ENCODE measurements at regions of chr1 and their contacts with region 1.

Region 1: DNA sequence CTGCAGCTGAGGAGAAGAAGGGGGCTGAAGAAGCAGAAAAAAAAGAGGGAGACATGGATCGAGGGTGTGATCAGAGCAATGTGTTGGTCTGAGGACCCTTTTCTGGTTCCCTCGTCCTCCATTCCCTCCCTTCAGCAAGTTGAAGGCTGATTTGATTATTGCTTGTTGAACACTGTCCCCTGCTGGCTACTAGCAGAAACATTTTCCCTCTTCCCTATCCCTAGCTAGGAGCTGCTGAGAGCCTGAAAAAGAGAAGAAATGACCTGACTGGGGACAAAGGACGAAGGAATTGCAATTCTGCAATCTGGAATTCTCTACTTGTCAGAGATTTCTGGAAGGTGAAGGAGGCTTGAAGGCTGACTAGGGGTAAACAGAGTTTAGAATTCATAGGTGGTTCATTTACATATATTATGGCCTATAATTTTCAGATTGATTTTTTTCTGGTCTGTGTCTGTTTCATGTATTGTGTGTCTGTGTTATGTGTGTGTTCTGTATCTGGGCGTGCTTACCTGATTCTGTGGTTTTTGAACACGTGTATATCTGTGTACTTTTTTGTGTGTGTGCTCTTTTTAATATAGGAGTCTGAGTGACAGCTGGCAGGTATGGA is 9.8 kb downstream of the NHLH1 start:
- DNase-seq: peak; percentile 44
- H3K4me3 Mint-ChIP-seq: no peak overlapping the region
- H3K27ac Mint-ChIP-seq: no peak overlapping the region
- H3K4me1 Mint-ChIP-seq: peaks cover 12% of the 10 kb centered on the region
- H3K27me3 Mint-ChIP-seq: peaks cover 35% of the 10 kb centered on the region

Region 2: DNA sequence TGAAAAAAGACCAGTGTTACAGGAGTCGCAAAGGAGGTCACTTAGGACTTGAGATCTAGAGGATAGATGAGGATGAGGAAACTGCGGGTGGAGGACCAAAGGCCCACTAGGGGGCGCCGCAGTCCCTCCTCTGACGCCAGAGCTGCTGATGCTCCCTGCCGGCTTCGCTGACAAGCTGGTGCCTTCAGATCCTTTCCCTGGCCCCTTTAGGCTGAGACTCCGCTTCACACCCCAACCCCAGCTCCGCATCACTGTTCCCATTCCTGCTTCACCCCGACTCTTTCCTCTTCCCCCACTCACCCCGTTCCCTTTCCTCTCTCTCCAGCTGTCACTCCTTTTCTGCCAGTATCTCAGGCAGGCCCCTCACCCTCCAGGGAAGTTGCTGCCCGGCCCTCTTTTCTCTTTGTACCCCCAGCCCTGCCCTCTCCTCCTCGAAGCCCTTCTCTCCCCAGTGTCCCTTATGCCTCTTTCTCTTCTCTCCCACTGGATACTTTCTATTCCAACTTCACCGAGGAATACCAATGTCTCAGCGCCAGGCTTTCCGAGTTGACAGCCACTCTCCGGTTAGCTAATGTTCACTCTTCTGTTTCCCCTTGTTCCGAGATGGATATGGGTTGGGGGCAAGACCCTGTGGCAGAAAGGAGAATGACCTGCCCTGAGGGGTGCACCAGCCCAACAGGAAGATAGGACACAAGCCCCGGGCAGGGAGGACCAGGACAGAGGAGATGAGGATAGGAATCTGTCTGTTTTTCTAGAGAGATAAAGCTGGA is 290.8 kb before region 1 on chr1:
- CTCF ChIA-PET with region 1: interaction called, 20 read pairs
- DNase-seq: peak; percentile 85
- H3K4me3 Mint-ChIP-seq: no peak overlapping the region
- H3K27ac Mint-ChIP-seq: no peak overlapping the region
- H3K4me1 Mint-ChIP-seq: peaks cover 12% of the 10 kb centered on the region
- H3K27me3 Mint-ChIP-seq: peaks cover 32% of the 10 kb centered on the region

Region 3: DNA sequence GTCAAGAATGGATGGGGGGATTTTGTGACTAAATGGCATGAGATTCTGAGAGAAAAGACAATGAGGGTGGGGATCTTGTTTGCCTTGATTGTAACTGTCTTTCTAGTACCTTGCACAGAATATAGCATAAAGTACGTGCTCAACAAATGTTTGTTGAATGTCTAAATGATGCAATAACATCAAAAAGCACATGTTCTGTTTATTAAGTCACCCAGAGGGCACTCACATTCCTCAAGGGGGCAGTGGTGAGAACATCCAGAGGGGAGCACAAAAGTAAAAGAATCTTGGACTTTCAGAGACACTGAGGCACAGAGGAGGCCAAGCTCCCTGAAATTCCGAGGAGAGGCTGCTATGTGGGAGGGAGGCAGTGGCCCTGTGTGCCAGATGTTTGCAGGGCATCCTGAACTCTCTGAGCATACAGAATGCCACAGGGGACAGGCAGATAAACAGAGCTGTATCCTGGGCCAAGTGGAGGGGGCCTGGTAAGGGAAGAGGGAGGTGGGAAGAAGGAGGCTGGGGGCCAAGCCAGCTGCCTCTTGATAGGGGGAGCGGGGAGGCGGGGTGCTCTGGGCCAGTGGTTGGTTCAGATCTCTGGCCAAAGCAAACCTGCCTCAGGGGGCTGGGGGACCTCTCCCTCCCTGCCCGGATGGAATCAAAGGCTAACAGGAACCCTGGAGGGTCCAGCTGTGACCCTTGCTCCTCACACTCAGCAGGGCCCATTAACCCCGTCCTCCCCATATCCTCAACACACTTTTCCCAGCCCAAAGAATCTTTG is 267.6 kb before region 1 on chr1:
- CTCF ChIA-PET with region 1: interaction called, 11 read pairs
- DNase-seq: peak; percentile 59
- H3K4me3 Mint-ChIP-seq: no peak overlapping the region
- H3K27ac Mint-ChIP-seq: peak overlapping the region; percentile 43
- H3K4me1 Mint-ChIP-seq: no peaks in the 10 kb centered on the region
- H3K27me3 Mint-ChIP-seq: peaks cover 49% of the 10 kb centered on the region

Region 4: GRCh38 chr1:160144921-160145320 is 231.7 kb before region 1 on chr1:
- CTCF ChIA-PET with region 1: no interaction called
- DNase-seq: no peak
- H3K4me3 Mint-ChIP-seq: no peak overlapping the region
- H3K27ac Mint-ChIP-seq: no peak overlapping the region
- H3K4me1 Mint-ChIP-seq: no peaks in the 10 kb centered on the region
- H3K27me3 Mint-ChIP-seq: peaks cover 39% of the 10 kb centered on the region

Region 5: DNA sequence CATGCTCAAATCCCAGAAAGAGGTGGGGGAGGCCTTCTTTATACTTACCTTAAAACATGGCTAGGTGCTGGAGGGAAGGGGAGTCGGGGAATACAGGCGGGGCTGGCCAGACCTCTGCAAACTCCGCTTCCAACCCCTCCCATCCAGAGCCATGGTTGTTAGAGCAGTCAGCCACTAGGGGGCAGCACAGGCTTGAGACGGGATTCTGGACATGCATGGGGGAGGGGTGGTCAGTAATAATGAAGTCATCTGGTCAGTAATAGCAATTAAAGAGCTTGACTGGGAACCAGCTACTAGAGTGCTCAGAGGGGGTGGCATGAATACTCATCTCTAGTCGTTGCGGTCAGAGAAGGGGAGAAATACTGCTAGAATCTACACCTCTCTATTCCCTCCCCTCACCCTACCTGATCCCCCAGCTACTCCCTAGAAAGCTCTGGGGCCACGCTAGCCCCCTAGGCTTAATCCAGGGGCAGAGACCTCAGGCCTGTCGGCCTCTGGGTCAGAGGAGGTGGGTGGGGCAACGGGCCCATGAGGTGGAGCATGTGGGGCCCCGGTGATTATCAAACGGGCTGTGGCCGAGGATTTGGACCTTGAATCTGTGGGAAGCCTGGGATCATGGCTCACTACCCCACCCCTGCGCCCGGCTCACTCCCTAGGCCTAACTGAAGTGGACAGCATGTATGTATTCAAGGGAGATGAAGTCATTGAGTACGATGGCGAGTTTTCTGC is 183.4 kb before region 1 on chr1:
- CTCF ChIA-PET with region 1: interaction called, 15 read pairs
- DNase-seq: peak; percentile 86
- H3K4me3 Mint-ChIP-seq: no peak overlapping the region
- H3K27ac Mint-ChIP-seq: no peak overlapping the region
- H3K4me1 Mint-ChIP-seq: no peaks in the 10 kb centered on the region
- H3K27me3 Mint-ChIP-seq: peaks cover 19% of the 10 kb centered on the region

Region 6: DNA sequence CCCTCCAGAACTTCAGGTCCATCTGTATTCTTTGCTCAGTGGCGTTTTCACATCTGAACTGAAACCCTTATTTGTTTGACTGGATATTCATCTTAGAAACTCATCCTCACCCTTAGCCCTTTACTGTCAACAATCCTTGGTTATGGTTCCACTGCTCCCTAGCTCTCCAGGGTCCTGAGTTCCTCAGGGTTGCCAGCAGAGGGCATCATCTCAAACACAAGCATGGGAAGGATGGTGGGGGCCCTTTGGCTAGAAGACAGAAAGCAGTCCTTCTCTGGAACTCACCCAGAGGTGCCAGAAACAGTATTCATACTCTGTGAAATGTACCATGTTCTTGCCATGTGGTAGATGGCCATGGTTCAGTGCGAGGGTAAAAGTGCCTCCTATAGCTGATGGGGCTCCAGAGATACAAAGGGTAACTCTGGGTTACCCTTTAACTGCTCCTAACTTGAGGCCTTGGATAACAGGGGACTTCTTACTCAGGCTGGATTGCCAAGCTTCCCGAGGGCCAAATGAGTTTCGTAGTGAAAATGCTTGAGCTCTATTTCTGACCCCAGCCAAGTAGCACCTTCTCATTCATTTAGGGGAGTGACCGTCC is 22.1 kb before region 1 on chr1:
- CTCF ChIA-PET with region 1: interaction called, 60 read pairs
- DNase-seq: peak; percentile 44
- H3K4me3 Mint-ChIP-seq: no peak overlapping the region
- H3K27ac Mint-ChIP-seq: no peak overlapping the region
- H3K4me1 Mint-ChIP-seq: no peaks in the 10 kb centered on the region
- H3K27me3 Mint-ChIP-seq: no peaks in the 10 kb centered on the region

Region 7: DNA sequence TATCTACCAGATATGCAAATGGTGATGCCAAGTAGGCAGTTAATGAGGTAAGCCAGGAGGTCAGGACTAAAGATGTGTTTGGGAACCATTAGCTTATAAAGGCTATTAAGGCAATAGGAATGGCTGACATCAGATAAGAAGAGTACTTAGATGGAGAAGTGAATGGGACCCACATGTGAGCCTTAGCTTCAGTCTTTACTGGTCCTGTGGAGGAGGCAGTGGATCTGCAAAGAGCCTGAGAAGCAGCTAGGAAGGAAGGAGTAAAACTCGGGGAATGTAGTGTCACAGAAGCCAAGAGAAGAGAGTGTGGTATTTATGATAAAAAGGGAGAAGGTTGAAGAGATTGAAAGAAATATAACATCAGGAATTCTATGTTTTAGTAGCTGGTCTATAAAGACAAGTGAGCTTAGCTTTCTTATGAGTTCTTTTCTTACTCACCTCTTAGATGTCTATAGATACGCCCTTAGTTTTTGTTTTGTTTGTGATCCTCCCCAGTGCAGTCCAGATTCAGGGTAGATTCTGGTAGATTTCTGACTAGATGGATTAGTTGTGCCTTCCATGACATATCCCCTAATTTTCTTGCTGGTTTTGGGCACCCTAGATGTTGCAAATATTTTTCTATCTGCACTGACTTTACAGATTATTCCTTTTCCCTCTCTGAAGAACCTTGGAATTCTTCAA is 107.0 kb after region 1 on chr1:
- CTCF ChIA-PET with region 1: no interaction called
- DNase-seq: no peak
- H3K4me3 Mint-ChIP-seq: no peak overlapping the region
- H3K27ac Mint-ChIP-seq: no peak overlapping the region
- H3K4me1 Mint-ChIP-seq: peaks cover 16% of the 10 kb centered on the region
- H3K27me3 Mint-ChIP-seq: no peaks in the 10 kb centered on the region

Measured in activated naive CD4-positive, alpha-beta T cell treated with anti-CD3 and anti-CD28 coated beads, Interleukin-2, amount 10 ng/mL, durations not matched to agents 7 days and 5 days (primary cell).